CD14-positive monocyte (primary cell): ENCODE measurements at regions of chr12 and their contacts with region 1.

Region 1: GRCh38 chr12:120495723-120496412 is at the start of gene DYNLL1:
- DNase-seq: peak; percentile 92 to 96 (median 93)
- H3K4me3 ChIP-seq: peak within 1 kb of the TSS; percentile 91 to 99 (median 99)
- H3K4me3 Mint-ChIP-seq: peak within 1 kb of the TSS; percentile 93 to 98
- H3K27ac ChIP-seq: peak within 1 kb of the TSS; percentile 57 to 76
- H3K27ac Mint-ChIP-seq: peak within 1 kb of the TSS; percentile 77 to 88 (median 84)
- H3K4me1 ChIP-seq: peaks cover 17 to 21% of the 10 kb centered on the region in 2 donors
- H3K4me1 Mint-ChIP-seq: peaks cover 24% of the 10 kb centered on the region
- H3K27me3 ChIP-seq: no peaks in the 10 kb centered on the region
- H3K27me3 Mint-ChIP-seq: peaks cover 0 to 2% (median 2%) of the 10 kb centered on the region in 3 donors
- CTCF ChIP-seq: no peak
- polyA plus RNA-seq, gene DYNLL1: 184 to 504 (median 486) TPM

Region 2: GRCh38 chr12:120445911-120446843 is 49.7 kb before region 1 on chr12 and contains the starts of genes GATC and TRIAP1:
- intact Hi-C with region 1: no loop called
- DNase-seq: peak; percentile 70 to 82 (median 80)
- H3K4me3 ChIP-seq: peak within 1 kb of the TSS; percentile 90 to 93 (median 93)
- H3K4me3 Mint-ChIP-seq: peak within 1 kb of the TSS; percentile 93 to 95
- H3K27ac ChIP-seq: peak within 1 kb of the TSS; percentile 75 to 93
- H3K27ac Mint-ChIP-seq: peak within 1 kb of the TSS; percentile 90 to 95 (median 94)
- H3K4me1 ChIP-seq: peaks cover 18 to 29% of the 10 kb centered on the region in 2 donors
- H3K4me1 Mint-ChIP-seq: peaks cover 19% of the 10 kb centered on the region
- H3K27me3 ChIP-seq: no peaks in the 10 kb centered on the region
- H3K27me3 Mint-ChIP-seq: peaks cover 0 to 2% (median 0%) of the 10 kb centered on the region in 3 donors
- CTCF ChIP-seq: no peak
- polyA plus RNA-seq, gene GATC: 10.7 to 13.8 (median 11.3) TPM
- polyA plus RNA-seq, gene TRIAP1: 11.3 to 61.9 (median 57.0) TPM

Region 3: GRCh38 chr12:120534203-120534702 is 38.4 kb after region 1 on chr12 and contains the start of gene RNF10:
- intact Hi-C with region 1: loop called (anchors 5 kb)
- DNase-seq: peak; percentile 83 to 86 (median 83)
- H3K4me3 ChIP-seq: peak within 1 kb of the TSS; percentile 88 to 98 (median 89)
- H3K4me3 Mint-ChIP-seq: peak within 1 kb of the TSS; percentile 90 to 93
- H3K27ac ChIP-seq: peak within 1 kb of the TSS; percentile 70 to 89
- H3K27ac Mint-ChIP-seq: peak within 1 kb of the TSS; percentile 79 to 95 (median 93)
- H3K4me1 ChIP-seq: peaks cover 51 to 58% of the 10 kb centered on the region in 2 donors
- H3K4me1 Mint-ChIP-seq: peaks cover 51% of the 10 kb centered on the region
- H3K27me3 ChIP-seq: no peaks in the 10 kb centered on the region
- H3K27me3 Mint-ChIP-seq: no peaks in the 10 kb centered on the region
- CTCF ChIP-seq: no peak
- polyA plus RNA-seq, gene RNF10: 62.4 to 178 (median 106) TPM